Activated CD4-positive, alpha-beta T cell treated with anti-CD3 and anti-CD28 coated beads, Interleukin-2, amount 10 ng/mL, durations not matched to agents 7 days and 5 days (primary cell): ENCODE measurements at regions of chr16 and their contacts with region 1.

Region 1: GRCh38 chr16:67017810-67018488 is 11.0 kb upstream of the CBFB start:
- DNase-seq: peak; percentile 94
- H3K4me3 Mint-ChIP-seq: no peak overlapping the region
- H3K27ac Mint-ChIP-seq: peak overlapping the region; percentile 46
- H3K4me1 Mint-ChIP-seq: peaks cover 42% of the 10 kb centered on the region
- H3K27me3 Mint-ChIP-seq: no peaks in the 10 kb centered on the region

Region 2: GRCh38 chr16:66977341-66978113 is 40.4 kb before region 1 on chr16:
- CTCF ChIA-PET with region 1: interaction called, 11 read pairs
- POLR2A ChIA-PET with region 1: interaction called, 3 read pairs
- DNase-seq: peak; percentile 91
- H3K4me3 Mint-ChIP-seq: no peak overlapping the region
- H3K27ac Mint-ChIP-seq: peak overlapping the region; percentile 62
- H3K4me1 Mint-ChIP-seq: peaks cover 67% of the 10 kb centered on the region
- H3K27me3 Mint-ChIP-seq: no peaks in the 10 kb centered on the region

Region 3: GRCh38 chr16:67006930-67007658 is 10.9 kb before region 1 on chr16:
- CTCF ChIA-PET with region 1: interaction called, 34 read pairs
- POLR2A ChIA-PET with region 1: no interaction called
- DNase-seq: no peak
- H3K4me3 Mint-ChIP-seq: no peak overlapping the region
- H3K27ac Mint-ChIP-seq: no peak overlapping the region
- H3K4me1 Mint-ChIP-seq: peaks cover 34% of the 10 kb centered on the region
- H3K27me3 Mint-ChIP-seq: no peaks in the 10 kb centered on the region

Region 4: DNA sequence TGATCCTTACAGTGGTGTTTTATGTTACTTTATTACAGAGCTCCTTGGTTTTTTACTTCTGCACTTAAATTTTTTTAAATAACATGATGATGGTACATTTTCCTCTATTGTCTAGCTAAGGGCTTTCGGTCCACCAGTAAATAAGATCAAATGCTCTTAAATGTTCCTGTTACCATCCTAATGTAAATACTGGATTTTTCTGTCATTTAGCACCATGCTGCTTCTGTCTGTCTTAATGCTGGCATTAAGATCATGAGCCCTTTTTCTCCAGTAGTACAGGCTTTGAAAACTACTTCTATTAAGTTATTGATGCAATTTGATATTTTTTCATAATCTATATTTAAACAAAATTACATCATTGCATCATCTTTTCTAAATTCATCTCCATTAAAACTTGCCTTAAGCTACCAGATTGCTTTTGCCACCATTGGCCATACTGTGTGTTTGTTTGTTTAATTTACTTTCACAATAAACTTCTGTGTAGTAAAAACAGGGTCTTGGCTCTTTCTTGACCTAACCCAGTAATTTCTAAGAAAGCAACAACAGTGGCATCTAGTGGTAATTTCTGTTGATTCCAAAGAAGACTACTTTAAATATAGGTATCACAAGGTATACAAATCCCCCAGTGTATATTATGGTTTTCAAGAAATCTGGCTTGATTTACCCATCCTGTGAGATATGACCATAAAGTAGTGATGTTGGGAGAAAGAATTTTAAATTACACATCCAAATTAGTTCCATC is 82.8 kb after region 1 on chr16:
- CTCF ChIA-PET with region 1: interaction called, 17 read pairs
- POLR2A ChIA-PET with region 1: no interaction called
- DNase-seq: no peak
- H3K4me3 Mint-ChIP-seq: no peak overlapping the region
- H3K27ac Mint-ChIP-seq: peak overlapping the region; percentile 50
- H3K4me1 Mint-ChIP-seq: no peaks in the 10 kb centered on the region
- H3K27me3 Mint-ChIP-seq: no peaks in the 10 kb centered on the region

Region 5: DNA sequence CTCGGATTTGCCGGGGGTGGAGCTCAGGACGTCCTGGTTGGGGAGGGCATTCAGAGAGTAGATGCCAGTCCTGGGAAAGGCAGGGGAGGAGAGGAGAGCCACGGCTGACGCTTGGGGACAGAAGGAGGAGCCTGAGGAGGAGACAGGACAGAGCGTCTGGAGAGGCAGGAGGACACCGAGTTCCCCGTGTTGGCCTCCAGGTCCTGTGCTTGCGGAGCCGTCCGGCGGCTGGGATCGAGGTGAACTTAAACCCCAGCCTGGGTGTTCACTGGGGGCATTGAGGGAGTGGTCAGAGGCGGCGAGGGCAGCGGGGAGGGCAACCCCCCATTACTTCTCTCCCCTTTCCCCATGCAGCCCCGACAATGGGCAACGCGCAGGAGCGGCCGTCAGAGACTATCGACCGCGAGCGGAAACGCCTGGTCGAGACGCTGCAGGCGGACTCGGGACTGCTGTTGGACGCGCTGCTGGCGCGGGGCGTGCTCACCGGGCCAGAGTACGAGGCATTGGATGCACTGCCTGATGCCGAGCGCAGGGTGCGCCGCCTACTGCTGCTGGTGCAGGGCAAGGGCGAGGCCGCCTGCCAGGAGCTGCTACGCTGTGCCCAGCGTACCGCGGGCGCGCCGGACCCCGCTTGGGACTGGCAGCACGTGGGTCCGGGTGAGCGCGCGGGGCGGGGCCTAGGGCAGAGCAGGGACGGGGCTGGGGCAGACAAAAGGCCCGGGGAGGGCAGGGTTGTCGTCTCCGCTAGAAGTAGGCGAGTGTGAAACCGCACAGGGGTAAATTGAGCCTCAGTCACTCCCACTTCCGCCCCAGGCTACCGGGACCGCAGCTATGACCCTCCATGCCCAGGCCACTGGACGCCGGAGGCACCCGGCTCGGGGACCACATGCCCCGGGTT is 156.1 kb after region 1 on chr16:
- CTCF ChIA-PET with region 1: interaction called, 10 read pairs
- POLR2A ChIA-PET with region 1: no interaction called
- DNase-seq: peak; percentile 73
- H3K4me3 Mint-ChIP-seq: peak overlapping the region; percentile 73
- H3K27ac Mint-ChIP-seq: peak overlapping the region; percentile 71
- H3K4me1 Mint-ChIP-seq: peaks cover 60% of the 10 kb centered on the region
- H3K27me3 Mint-ChIP-seq: peaks cover 44% of the 10 kb centered on the region